ENCODE measurements at regions of chr3 and their contacts with region 1.

Region 1: DNA sequence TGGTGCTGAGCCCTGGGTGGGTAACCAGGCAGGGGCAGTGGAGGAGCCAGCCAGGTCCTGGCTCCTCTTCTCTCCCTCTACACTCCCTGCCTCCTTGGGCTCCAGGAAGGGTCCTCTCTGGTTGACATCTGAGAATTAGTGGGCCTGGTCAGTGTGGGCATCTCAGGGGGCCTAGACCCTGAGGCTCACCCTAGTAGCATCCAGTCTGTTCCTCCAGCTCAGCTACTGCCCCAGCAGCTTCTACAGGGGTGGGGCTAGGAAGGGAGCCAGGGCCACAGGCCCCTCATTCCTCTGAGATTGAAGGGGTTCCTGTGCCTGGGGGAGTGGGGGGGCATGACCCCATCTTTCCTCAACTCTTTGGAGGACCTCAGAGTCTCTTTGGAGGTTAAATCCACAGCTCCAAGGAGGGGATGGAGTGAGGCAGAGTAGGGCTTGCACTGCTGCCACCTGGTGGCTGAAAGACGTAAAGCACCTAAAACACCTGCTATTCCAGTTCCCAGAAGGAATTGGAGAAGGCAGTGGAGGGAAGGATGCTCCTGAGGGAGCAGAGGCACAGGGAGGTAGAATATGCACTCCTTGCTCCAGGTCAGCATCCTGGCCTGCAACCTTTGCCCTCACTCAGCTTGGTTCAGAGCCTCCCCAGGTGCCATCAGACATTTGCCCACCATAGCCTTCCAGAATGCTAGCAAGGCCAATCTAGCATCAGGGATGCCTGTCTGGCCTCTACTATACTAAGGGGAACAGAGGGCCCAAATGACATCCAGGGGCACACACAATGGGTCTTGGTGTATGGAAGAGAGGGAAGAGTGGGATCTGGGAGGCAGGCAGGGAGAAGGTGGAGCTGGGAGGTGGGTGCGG is 25.1 kb downstream of the C3orf18 start:
- DNase-seq: peak; percentile 49 to 91 (median 82)

Region 2: DNA sequence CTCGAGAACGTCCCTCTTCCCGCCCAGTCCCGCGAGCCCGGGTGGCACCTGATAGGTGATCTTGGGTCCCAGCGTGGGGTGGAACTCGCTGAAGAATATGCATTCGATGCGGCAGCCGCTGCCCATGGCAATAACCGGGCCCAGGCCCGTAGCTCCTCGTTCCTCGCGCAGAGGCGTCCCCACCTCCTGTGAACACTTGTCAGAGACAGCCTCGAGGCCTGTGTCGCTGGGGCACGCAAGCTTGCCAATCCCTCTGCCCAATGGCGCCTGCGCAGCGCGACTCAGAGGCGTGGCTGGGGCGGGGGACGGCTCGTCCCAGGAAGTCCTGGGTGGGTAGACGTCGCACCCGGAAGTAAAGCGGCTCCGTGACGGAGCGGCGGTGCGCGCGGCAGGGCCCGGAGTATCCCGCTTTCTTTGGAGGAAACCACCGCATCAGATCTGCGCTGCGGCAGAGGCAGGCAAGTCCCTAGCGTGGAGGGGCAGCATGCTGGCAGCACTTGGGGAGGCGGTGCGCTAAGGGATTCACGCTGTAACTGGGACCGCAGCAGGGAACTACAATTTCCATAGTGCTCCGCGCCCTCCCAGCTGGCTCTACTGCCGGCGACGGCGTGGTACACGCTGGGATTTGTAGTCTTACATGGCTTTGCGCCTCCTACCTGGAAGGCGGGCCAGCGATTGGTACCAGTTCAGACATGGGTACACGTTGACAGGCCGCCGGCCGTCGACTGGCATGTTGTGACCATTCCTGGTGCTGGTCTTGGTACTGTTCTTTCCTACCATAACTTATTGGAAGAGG is 191.7 kb before region 1 on chr3 and contains the starts of genes CYB561D2 and NPRL2:
- intact Hi-C with region 1: loop called (anchors 5 kb)
- DNase-seq: peak; percentile 97 to 100 (median 99)

Region 3: DNA sequence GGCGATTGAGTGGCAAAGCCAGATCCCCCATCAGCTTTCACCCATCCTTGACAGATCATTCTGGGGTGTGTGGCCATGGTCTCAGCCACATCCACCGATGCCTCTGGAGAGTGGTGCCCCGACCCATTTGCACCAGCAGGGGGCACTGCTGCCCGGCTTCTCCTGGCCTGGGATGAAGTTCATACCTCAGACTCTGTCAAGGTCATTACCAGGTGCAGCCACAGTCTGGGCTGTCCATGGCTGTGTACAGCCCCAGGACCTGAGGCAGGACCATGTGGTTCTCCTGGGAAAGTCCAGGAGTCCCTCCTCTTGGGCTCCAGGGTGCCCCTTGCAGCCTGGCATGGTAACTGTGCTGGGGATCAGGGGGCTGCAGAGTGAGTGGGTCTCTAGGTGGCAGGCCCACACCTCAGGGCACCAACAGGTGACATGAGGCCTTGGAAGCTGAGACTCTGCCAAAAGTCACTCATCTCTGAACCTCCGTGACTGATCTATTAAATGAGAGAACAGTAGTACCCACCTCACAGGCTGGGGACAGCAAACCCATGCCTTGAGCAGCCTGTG is 106.2 kb before region 1 on chr3:
- intact Hi-C with region 1: loop called (anchors 5 kb)
- DNase-seq: peak in 41 of 42 donors; percentile 52 to 87 (median 73)

Region 4: DNA sequence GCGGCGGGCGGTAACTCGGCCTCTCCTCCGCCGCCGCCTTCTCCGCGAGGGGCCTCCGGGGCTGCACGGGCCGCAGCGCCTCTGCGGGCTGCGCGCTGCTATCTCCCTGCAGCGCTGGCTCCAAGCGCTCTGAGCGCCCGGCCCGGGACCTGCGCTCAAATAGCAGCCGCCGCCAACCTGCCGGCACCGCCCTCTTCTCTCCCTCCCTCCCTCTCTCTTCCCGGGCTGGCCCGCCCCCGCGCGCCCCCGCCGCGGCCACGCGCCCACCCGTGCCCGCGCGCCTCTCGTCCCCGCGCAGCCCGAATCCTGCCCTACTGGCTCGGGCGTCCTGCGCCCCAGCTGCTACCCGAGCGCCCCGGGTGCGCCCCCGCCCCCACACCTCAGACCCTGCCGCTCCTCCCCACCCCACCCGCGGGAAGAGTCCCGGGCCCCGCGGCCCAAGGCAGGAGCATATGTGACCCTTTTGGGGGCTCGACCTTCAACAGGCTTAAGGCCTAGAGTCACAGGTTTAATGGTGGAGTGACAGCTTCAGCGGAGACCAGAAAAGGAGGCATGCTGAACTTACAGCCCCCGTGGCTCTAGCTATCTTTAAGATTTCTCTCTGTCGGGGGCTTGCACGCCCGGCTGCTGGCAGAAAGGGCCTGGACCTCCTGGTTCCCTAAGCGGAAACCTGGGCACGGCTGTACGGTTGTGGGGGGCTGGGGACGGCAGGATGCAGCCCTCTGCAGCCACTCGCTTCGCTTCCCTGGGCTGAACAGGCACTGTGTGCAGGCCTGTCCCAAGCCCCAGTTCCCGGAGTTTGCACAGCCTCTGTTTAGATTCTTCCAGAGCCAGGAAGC is 38.7 kb before region 1 on chr3 and contains the start of gene CACNA2D2:
- intact Hi-C with region 1: no loop called
- DNase-seq: peak in 40 of 42 donors; percentile 26 to 81 (median 58)